Activated T-helper 1 cell treated with anti-CD3 and anti-CD28 coated beads, Interleukin-12 subunit alpha, Interleukin-12 subunit beta, Interleukin-2, Interleukin-4 antibody, amounts not matched to agents 30 ng/mL and 10 ng/mL and 1 ng/mL, durations not matched to agents 14 hours and 24 hours and 36 hours (primary cell): ENCODE measurements at regions of chr2 and their contacts with region 1.

Region 1: GRCh38 chr2:102366406-102367112 is 11.0 kb downstream of the IL18R1 start:
- DNase-seq: no peak
- H3K4me3 Mint-ChIP-seq: peak overlapping the region; percentile 79
- H3K27ac Mint-ChIP-seq: peak overlapping the region; percentile 97
- H3K4me1 Mint-ChIP-seq: peaks cover 97% of the 10 kb centered on the region
- H3K27me3 Mint-ChIP-seq: no peaks in the 10 kb centered on the region

Region 2: DNA sequence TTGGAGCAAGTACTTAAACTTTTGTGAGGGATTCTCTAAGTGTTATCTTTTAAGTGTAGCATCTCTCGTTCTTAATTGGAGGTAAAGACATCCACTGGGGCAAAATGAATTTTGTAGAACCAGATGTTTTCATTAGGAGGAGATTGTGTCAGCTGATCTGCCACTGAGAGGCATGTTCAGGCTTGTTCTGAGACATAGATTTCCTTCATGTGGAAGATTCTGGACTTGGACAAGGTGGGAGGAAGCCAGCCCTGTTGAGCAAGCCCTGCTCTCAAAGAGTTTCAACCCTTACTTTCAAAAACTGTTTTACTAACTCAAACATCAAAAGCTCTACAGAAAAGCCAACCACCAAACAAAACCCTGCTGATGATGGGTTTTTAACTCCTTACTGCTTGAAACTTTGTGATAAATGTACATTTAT is 662.5 kb before region 1 on chr2:
- intact Hi-C with region 1: loop called (anchors 5 kb)
- DNase-seq: no peak
- H3K4me3 Mint-ChIP-seq: peak overlapping the region; percentile 78
- H3K27ac Mint-ChIP-seq: peak overlapping the region; percentile 82
- H3K4me1 Mint-ChIP-seq: peaks cover 64% of the 10 kb centered on the region
- H3K27me3 Mint-ChIP-seq: no peaks in the 10 kb centered on the region

Region 3: DNA sequence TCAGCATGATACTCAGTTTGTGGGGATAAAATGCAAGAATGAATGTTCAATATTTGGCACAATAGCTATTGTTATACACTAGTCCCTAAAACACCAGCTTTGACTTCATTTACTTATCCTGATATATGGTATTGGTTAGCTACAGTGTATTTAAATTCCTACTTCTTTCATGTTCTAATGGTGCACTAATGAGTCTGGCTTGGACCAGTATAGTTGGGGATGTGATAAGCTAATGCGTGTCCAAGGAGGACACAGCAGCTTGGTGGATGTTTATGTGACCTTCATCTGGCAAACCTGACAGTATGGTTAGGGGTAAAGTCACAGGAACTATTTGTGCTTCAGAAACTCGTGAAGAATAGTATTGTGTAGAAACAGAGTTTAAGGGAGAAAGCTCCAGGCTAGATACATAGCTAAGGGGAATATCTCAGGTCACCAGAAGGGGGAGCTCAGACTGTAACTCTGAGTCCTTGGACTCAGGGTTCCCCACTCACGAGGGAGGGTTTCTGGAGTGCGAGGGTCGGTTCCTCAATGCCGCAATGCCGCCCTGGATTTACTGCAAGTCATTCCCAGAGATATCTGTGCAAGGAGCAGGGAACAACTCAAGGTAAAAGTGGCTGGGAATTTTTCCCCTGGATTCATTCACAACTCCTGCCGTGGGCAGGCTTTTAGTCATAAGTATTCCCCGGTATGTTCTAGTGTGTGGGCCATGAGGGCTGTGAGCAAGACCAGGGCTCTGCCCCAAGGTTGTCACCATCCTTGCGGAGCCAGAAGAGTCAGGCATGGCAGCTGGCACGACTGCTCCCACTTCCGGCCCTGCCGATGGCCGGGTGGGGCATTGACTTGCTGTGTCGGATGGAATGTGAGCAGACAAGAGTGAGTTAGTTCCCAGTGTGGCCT is 360.3 kb before region 1 on chr2:
- intact Hi-C with region 1: loop called (anchors 10 kb)
- DNase-seq: no peak
- H3K4me3 Mint-ChIP-seq: no peak overlapping the region
- H3K27ac Mint-ChIP-seq: no peak overlapping the region
- H3K4me1 Mint-ChIP-seq: peaks cover 14% of the 10 kb centered on the region
- H3K27me3 Mint-ChIP-seq: peaks cover 2% of the 10 kb centered on the region

Region 4: DNA sequence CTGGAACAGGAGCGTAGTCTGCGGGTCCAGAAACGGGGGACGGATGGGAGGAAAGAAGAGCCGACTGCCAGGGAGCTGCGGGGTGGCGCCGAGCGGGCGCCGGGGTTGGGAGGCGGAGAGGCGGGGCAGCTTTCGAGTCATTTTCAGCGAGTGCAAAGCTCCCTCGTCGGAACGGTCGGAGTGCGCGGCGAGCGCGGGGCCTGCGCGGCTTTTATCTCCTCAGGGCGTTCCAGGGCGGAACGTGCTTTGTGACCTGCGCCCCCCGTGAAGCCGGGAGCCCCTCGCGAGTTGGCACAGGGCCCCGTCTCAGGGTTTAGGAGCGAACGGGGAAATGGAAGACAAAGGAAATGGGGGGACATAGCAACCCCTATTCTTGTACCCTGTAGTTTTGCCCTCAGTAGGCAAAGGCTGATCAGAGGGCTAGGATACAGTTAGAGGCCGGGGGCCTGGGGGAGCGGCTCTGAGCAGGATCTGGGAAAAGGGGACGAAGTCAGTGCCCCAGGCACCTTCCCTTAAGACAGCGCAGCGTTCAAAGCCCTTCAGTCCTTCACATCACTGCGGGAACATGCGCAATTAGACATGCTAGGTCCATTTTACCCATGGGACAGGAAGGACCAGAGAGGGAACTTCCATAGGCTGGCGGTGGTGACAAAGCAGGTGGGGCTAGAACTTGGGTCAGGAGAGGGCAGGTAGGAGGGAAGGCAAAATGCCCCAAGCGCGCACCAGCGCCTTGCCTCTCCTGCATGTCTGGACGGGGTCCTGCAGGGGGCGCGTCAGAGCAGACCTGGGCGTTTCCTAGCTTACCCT is 115.3 kb before region 1 on chr2:
- intact Hi-C with region 1: no loop called
- DNase-seq: peak; percentile 49
- H3K4me3 Mint-ChIP-seq: peak overlapping the region; percentile 72
- H3K27ac Mint-ChIP-seq: peak overlapping the region; percentile 71
- H3K4me1 Mint-ChIP-seq: peaks cover 44% of the 10 kb centered on the region
- H3K27me3 Mint-ChIP-seq: peaks cover 4% of the 10 kb centered on the region

Region 5: DNA sequence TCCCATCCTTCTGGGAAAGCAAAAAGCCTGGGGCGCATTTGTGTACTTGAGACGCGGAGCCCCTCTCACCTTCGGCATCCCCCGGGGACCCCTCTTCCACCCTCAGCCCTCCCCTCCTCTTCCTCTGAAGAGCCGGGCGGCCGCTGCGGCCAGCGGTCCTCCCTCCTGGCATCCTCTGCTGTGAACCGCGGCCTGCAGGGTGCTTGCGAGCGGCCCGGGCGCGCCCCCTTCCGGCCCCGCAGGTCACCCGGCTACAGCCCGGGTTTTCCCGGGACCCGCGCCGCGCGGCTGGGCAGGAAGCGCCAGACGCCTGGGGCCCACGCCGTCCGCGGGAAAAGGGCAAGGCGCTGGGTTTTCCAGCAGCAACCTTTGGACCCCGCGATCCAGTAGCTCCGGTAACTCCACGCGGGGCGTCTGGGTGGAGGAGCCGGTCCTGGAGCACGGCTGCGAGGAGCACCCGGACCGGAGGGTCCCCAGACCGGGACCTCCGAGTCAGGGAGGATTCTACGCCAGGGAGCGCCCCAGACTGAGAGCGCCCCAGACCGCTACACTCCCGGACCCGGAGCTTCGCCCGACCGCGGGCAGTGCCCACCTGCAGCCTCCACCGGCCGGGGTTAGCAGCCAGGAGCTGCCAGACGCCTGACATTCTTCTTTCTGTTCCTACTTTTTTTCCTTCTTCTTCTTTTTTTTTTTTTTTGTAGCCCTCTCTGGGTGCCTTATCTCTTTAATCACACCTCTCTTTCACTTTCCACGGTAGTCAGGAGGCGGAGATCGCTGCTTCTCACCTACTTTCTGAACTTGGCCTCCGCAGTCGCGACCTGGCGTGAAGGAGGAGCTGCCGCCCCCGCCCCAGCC is 10.8 kb before region 1 on chr2 and contains the start of gene IL18R1:
- intact Hi-C with region 1: loop called (anchors 1 kb)
- DNase-seq: peak; percentile 71
- H3K4me3 Mint-ChIP-seq: peak within 1 kb of the TSS; percentile 97
- H3K27ac Mint-ChIP-seq: peak within 1 kb of the TSS; percentile 96
- H3K4me1 Mint-ChIP-seq: peaks cover 47% of the 10 kb centered on the region
- H3K27me3 Mint-ChIP-seq: no peaks in the 10 kb centered on the region
- total RNA-seq, gene IL18R1: 57.8 and 61.3 TPM in 2 replicates

Region 6: GRCh38 chr2:102418421-102418961 is 51.9 kb after region 1 on chr2:
- intact Hi-C with region 1: loop called (anchors 1 kb)
- DNase-seq: peak; percentile 34
- H3K4me3 Mint-ChIP-seq: peak overlapping the region; percentile 90
- H3K27ac Mint-ChIP-seq: peak overlapping the region; percentile 94
- H3K4me1 Mint-ChIP-seq: peaks cover 68% of the 10 kb centered on the region
- H3K27me3 Mint-ChIP-seq: no peaks in the 10 kb centered on the region